HAP-1 (cell line): ENCODE measurements at regions of chr5 and their contacts with region 1.

Region 1: DNA sequence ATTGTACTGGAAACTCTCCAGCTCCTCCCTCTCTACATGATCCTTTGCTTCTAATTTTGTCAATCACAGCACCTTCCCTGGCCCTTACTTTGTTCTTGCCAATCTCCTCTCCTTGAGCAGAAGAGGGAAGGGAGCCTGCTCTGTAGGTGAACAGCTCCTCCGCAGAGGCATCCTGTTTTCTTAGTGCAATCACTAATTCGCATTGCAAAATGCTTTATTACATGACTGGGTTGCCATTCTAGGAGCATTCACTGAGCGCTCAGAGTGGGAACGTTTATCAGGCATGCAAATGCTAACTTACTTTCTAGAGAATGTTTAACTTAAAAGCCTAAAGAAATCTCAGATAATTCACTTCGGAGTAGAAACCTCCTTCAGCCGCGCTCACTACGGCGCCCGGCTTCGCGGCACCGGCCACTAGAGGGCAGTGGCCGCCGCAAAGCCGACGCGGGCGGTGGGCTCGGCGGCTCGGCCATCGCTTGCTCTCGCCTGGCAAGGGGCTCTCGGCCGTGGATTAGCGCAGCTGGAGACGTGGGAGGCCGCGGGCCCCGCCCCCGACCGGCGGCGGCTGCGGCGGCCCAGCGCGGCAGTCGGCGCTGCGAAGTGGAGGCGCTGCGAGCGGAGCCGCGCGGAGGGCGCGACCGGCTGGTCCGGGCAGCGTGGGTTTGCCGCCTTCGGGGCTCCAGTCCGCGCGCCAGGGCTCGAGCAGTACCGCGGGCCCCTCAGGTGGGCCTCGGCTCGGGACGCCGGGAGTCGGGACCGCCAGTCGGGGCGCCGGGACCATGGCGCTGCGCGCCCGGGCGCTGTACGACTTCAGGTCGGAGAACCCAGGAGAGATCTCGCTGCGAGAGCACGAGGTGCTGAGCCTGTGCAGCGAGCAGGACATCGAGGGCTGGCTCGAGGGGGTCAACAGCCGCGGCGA is at the start of gene SNX18:
- DNase-seq: peak; percentile 85 to 92
- H3K4me3 ChIP-seq: peak within 1 kb of the TSS; percentile 62
- H3K4me1 ChIP-seq: peaks cover 14% of the 10 kb centered on the region; the same call in 1 of the 2 replicates
- H3K27me3 ChIP-seq: no peaks in the 10 kb centered on the region

Region 2: GRCh38 chr5:54159153-54159892 is 358.1 kb before region 1 on chr5:
- in situ Hi-C with region 1: no loop called
- DNase-seq: no peak
- H3K4me3 ChIP-seq: no peak overlapping the region
- H3K4me1 ChIP-seq: no peaks in the 10 kb centered on the region
- H3K27me3 ChIP-seq: no peaks in the 10 kb centered on the region

Region 3: GRCh38 chr5:54867310-54867944 is 350.0 kb after region 1 on chr5:
- in situ Hi-C with region 1: loop called (anchors 10 kb)
- DNase-seq: peak in 1 of 2 experiments; percentile 51
- H3K4me3 ChIP-seq: no peak overlapping the region
- H3K4me1 ChIP-seq: no peaks in the 10 kb centered on the region
- H3K27me3 ChIP-seq: peaks cover 8% of the 10 kb centered on the region